HepG2 (cell line): ENCODE measurements at regions of chr22 and their contacts with region 1.

Region 1: DNA sequence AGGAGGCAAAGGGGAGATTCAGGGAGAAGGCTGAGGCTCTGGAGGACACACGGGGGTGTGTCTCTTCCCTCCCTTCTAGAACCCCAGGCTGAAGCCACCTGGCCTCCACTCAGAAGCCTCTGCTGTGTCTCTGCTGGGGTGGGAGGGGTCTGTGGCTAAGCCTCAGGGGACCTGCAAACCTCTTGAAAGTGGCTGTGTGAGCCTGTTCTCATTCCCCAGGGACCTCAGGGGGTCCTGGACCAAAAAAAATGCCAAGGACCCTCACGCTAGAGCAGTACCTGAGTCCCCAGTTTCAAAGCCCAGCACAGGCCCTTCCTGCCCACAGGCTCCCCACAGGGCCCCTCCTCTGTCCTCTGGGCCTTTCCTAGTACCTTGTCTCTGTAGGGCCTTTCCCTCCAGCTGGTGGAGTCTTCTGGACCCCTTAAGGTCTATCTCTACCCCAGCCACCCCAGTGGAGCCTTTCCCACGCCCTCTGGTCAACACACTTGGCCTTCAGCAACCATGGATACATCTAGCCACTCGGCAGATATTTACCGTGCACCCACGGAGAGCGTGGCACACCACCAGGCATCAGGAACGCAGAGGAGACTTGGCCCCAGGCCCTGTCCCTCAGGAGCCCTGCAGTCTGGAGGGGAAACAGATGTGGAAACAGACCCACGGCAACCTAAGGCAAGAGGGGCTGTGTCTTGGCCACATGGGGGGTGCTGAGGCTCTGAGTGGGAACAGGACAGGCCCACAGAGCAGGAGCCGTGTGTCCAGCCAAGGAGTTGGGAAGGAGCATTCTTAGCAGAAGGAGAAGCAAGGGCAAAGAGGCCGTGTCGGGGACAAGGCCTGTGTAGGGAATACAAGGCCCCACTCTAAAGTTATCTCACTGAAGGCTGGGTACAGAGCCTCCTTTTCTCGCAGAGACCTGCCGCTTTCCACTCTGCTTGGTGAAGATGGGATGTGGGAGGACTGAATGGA is 18.5 kb downstream of the PLA2G6 start:
- DNase-seq: no peak
- ATAC-seq: no peak; the same call in 2 of the 3 replicates
- H3K4me3 ChIP-seq: no peak overlapping the region
- H3K27ac ChIP-seq: peak overlapping the region; percentile 67
- H3K4me1 ChIP-seq: peaks cover 39% of the 10 kb centered on the region
- H3K27me3 ChIP-seq: no peaks in the 10 kb centered on the region
- CTCF ChIP-seq: no peak
- EP300 ChIP-seq: no peak
- POLR2A ChIP-seq: no peak
- RAD21 ChIP-seq: no peak

Region 2: GRCh38 chr22:38176170-38176741 is 13.1 kb after region 1 on chr22:
- CTCF ChIA-PET with region 1: no interaction called
- POLR2A ChIA-PET with region 1: interaction called, 46 read pairs
- in situ Hi-C with region 1: no loop called
- intact Hi-C with region 1: no loop called
- DNase-seq: no peak
- ATAC-seq: no peak
- H3K4me3 ChIP-seq: no peak overlapping the region
- H3K27ac ChIP-seq: no peak overlapping the region
- H3K4me1 ChIP-seq: peaks cover 73% of the 10 kb centered on the region
- H3K27me3 ChIP-seq: no peaks in the 10 kb centered on the region; a peak in 1 of 5 replicates
- CTCF ChIP-seq: no peak
- EP300 ChIP-seq: no peak
- POLR2A ChIP-seq: no peak
- RAD21 ChIP-seq: no peak

Region 3: GRCh38 chr22:38181453-38182247 is 18.5 kb after region 1 on chr22 and contains the start of gene PLA2G6:
- CTCF ChIA-PET with region 1: no interaction called
- POLR2A ChIA-PET with region 1: interaction called, 46 read pairs
- in situ Hi-C with region 1: no loop called
- intact Hi-C with region 1: no loop called
- DNase-seq: peak; percentile 97
- ATAC-seq: peak; percentile 86
- H3K4me3 ChIP-seq: peak within 1 kb of the TSS; percentile 67 to 86 (median 77)
- H3K27ac ChIP-seq: peak within 1 kb of the TSS; percentile 82
- H3K4me1 ChIP-seq: peaks cover 59% of the 10 kb centered on the region
- H3K27me3 ChIP-seq: no peaks in the 10 kb centered on the region; a peak in 1 of 5 replicates
- CTCF ChIP-seq: no peak
- EP300 ChIP-seq: peak in 1 of 2 experiments; percentile 38; a peak in 1 of 4 replicates
- POLR2A ChIP-seq: peak; percentile 57 to 65
- RAD21 ChIP-seq: 0 out of 2 replicates have a peak, but pooled peaks have one; percentile 9
- total RNA-seq, gene PLA2G6: 1.8 and 4.8 TPM in 2 replicates